ENCODE measurements at regions of chr9 and their contacts with region 1.

Region 1: GRCh38 chr9:12819436-12820185 is 44.8 kb downstream of the LURAP1L start:
- DNase-seq: no peak
- H3K4me3 ChIP-seq: no peak overlapping the region
- H3K27ac ChIP-seq: peak overlapping the region; percentile 50 to 70 (median 60)
- H3K4me1 ChIP-seq: peaks cover 11 to 48% (median 44%) of the 10 kb centered on the region in 4 donors
- H3K27me3 ChIP-seq: no peaks in the 10 kb centered on the region
- CTCF ChIP-seq: peak in 2 of 3 experiments; percentile 28 to 52
- EP300 ChIP-seq: no peak
- POLR2A ChIP-seq: no peak

Region 2: GRCh38 chr9:12464910-12465512 is 354.6 kb before region 1 on chr9:
- intact Hi-C with region 1: no loop called
- DNase-seq: no peak
- H3K4me3 ChIP-seq: no peak overlapping the region
- H3K27ac ChIP-seq: no peak overlapping the region
- H3K4me1 ChIP-seq: no peaks in the 10 kb centered on the region
- H3K27me3 ChIP-seq: no peaks in the 10 kb centered on the region
- CTCF ChIP-seq: peak; percentile 35 to 68 (median 58)
- EP300 ChIP-seq: no peak
- POLR2A ChIP-seq: no peak

Region 3: GRCh38 chr9:12739014-12739652 is 80.5 kb before region 1 on chr9:
- intact Hi-C with region 1: no loop called
- DNase-seq: no peak
- H3K4me3 ChIP-seq: no peak overlapping the region
- H3K27ac ChIP-seq: no peak overlapping the region
- H3K4me1 ChIP-seq: no peaks in the 10 kb centered on the region
- H3K27me3 ChIP-seq: no peaks in the 10 kb centered on the region
- CTCF ChIP-seq: no peak
- EP300 ChIP-seq: no peak
- POLR2A ChIP-seq: no peak

Region 4: GRCh38 chr9:12775679-12776512 is 43.7 kb before region 1 on chr9:
- intact Hi-C with region 1: loop called (anchors 5 kb)
- DNase-seq: no peak
- H3K4me3 ChIP-seq: peak overlapping the region; percentile 76 to 89 (median 83)
- H3K27ac ChIP-seq: peak overlapping the region; percentile 86 to 94 (median 90)
- H3K4me1 ChIP-seq: peaks cover 5 to 47% (median 38%) of the 10 kb centered on the region in 4 donors
- H3K27me3 ChIP-seq: no peaks in the 10 kb centered on the region
- CTCF ChIP-seq: peak; percentile 54 to 60 (median 58)
- EP300 ChIP-seq: no peak
- POLR2A ChIP-seq: no peak

Region 5: GRCh38 chr9:13267743-13268142 is 448.1 kb after region 1 on chr9:
- intact Hi-C with region 1: loop called (anchors 10 kb)
- DNase-seq: no peak
- H3K4me3 ChIP-seq: no peak overlapping the region
- H3K27ac ChIP-seq: peak overlapping the region in 2 of 4 donors; percentile 19 to 35
- H3K4me1 ChIP-seq: peaks cover 35 to 74% (median 46%) of the 10 kb centered on the region in 4 donors
- H3K27me3 ChIP-seq: no peaks in the 10 kb centered on the region
- CTCF ChIP-seq: no peak
- EP300 ChIP-seq: no peak
- POLR2A ChIP-seq: no peak

Measured in esophagus muscularis mucosa (tissue), 4 donors.